ENCODE measurements at regions of chrX and their contacts with region 1.

Region 1: GRCh38 chrX:153947009-153947769 is 2.7 kb upstream of the RENBP start:
- DNase-seq: no peak
- ATAC-seq: peak; percentile 95
- H3K4me3 ChIP-seq: no peak overlapping the region
- H3K27ac ChIP-seq: no peak overlapping the region
- H3K4me1 ChIP-seq: no peaks in the 10 kb centered on the region
- H3K27me3 ChIP-seq: no peaks in the 10 kb centered on the region
- CTCF ChIP-seq: peak; percentile 95 to 97 (median 97); a peak in 5 of 6 replicates
- EP300 ChIP-seq: no peak
- POLR2A ChIP-seq: no peak; the same call in none of the 2 replicates
- RAD21 ChIP-seq: peak; percentile 62

Region 2: GRCh38 chrX:152614791-152615190 is 1332.4 kb before region 1 on chrX:
- CTCF ChIA-PET with region 1: no interaction called
- POLR2A ChIA-PET with region 1: no interaction called
- RAD21 ChIA-PET with region 1: no interaction called
- SMC1A ChIA-PET with region 1: no interaction called
- in situ Hi-C with region 1: no loop called
- intact Hi-C with region 1: no loop called
- DNase-seq: no peak
- ATAC-seq: no peak
- H3K4me3 ChIP-seq: no peak overlapping the region
- H3K27ac ChIP-seq: no peak overlapping the region
- H3K4me1 ChIP-seq: no peaks in the 10 kb centered on the region
- H3K27me3 ChIP-seq: no peaks in the 10 kb centered on the region; a peak in 1 of 4 replicates
- CTCF ChIP-seq: no peak
- EP300 ChIP-seq: no peak
- POLR2A ChIP-seq: no peak
- RAD21 ChIP-seq: no peak

Region 3: DNA sequence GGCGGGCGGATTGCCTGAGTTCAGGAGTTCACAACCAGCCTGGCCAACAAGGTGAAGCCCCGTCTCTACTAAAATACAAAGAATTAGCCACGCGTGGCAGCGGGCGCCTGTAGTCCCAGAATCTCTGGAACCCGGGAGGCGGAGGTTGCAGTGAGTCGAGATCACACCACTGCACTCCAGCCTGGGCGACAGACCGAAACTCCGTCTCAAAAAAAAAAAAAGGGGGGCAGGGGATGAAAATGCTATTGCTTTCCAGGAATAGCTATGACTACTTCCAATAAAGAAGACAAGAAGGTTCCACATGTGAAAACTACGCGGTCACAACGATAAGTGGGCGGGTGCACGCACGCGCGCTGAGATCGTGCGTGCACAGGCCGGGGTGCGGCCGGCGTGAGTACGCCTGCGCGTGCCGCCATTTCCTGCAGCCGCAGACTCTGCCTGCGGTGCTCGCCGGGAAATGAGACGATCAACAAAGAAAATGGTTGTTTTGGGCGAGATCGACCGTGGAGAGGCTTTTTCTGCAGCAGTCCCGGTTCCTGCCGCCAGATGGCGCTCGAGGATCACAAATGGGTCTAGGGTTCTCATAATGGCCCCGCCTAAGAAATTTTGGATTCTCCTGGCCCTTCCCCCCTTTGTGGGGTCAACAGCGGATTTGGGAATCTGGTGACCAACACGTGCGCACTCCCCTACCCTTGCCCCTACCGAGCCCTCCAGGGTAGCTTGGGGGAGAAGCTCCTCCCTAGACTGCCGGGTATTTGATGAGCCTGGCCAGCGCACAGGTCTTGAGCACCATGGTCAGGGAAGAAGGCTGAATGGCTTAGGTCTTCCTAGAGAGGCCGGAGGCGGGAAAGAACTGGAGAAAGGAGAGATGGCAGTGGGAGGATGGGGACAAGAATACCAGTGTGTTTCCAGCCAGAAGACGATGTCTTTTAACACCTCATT is 988.4 kb before region 1 on chrX:
- CTCF ChIA-PET with region 1: no interaction called
- POLR2A ChIA-PET with region 1: no interaction called
- RAD21 ChIA-PET with region 1: no interaction called
- SMC1A ChIA-PET with region 1: no interaction called
- in situ Hi-C with region 1: no loop called
- intact Hi-C with region 1: loop called (anchors 5 kb)
- DNase-seq: peak; percentile 55
- ATAC-seq: peak; percentile 100
- H3K4me3 ChIP-seq: peak overlapping the region; percentile 53; the same call in 1 of the 2 replicates
- H3K27ac ChIP-seq: no peak overlapping the region
- H3K4me1 ChIP-seq: no peaks in the 10 kb centered on the region
- H3K27me3 ChIP-seq: no peaks in the 10 kb centered on the region
- CTCF ChIP-seq: peak; percentile 87 to 97 (median 89)
- EP300 ChIP-seq: no peak
- POLR2A ChIP-seq: 0 out of 2 replicates have a peak, but pooled peaks have one; percentile 38
- RAD21 ChIP-seq: peak; percentile 90

Region 4: GRCh38 chrX:153800746-153801145 is 146.4 kb before region 1 on chrX:
- CTCF ChIA-PET with region 1: no interaction called
- POLR2A ChIA-PET with region 1: no interaction called
- RAD21 ChIA-PET with region 1: no interaction called
- SMC1A ChIA-PET with region 1: no interaction called
- in situ Hi-C with region 1: no loop called
- intact Hi-C with region 1: no loop called
- DNase-seq: no peak
- ATAC-seq: peak; percentile 25
- H3K4me3 ChIP-seq: no peak overlapping the region
- H3K27ac ChIP-seq: no peak overlapping the region
- H3K4me1 ChIP-seq: peaks cover 4% of the 10 kb centered on the region; the same call in 1 of the 2 replicates
- H3K27me3 ChIP-seq: no peaks in the 10 kb centered on the region
- CTCF ChIP-seq: no peak
- EP300 ChIP-seq: no peak
- POLR2A ChIP-seq: no peak
- RAD21 ChIP-seq: no peak

Region 5: GRCh38 chrX:153911798-153912197 is 35.4 kb before region 1 on chrX:
- CTCF ChIA-PET with region 1: interaction called, 10 read pairs
- POLR2A ChIA-PET with region 1: no interaction called
- RAD21 ChIA-PET with region 1: no interaction called
- SMC1A ChIA-PET with region 1: no interaction called
- in situ Hi-C with region 1: no loop called
- intact Hi-C with region 1: no loop called
- DNase-seq: no peak
- ATAC-seq: no peak
- H3K4me3 ChIP-seq: no peak overlapping the region
- H3K27ac ChIP-seq: no peak overlapping the region
- H3K4me1 ChIP-seq: no peaks in the 10 kb centered on the region
- H3K27me3 ChIP-seq: no peaks in the 10 kb centered on the region
- CTCF ChIP-seq: no peak
- EP300 ChIP-seq: no peak
- POLR2A ChIP-seq: no peak
- RAD21 ChIP-seq: no peak

Region 6: DNA sequence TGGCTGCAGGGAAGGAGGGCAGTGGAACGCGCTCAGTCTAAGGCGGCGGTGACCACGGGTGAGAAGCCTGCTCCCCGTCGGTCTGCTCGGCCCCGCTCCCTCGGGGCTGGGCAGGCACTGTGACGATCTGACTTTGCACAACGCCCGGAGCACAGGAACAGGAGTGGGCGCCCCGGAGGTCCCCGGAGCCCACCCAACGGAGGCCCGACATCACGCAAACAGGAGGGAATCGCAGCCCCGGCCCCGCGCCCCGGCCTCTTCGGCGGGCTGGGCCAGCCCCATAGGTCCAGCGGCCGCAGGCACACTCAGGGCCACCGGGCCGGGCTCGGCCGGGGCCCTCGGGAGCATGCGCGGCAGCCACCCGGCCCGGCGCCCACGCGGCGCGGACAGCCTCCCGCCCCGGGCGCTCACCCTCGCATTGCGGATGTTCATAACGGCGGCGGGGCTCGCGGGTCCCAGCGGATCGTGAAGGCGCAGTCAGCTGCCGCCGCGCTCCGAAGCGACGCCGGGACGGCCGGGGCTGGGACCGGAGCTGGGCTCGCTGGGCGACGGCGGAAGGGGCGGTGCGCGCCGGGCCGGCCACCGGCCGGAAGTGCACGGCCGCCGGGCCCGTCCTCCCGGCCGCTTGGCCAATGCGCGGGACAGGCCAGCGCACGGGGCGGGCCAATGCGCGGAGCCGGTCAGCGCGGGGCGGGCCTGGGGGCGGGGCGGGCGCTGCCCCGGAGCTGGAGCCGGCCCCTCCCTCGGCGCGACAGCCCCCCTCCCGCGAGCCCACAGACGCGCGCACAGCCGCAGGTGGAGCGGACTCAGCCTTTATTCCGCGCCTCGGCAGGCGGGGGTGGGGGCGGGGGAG is 12.5 kb before region 1 on chrX and contains the start of gene NAA10:
- CTCF ChIA-PET with region 1: interaction called, 172 read pairs
- POLR2A ChIA-PET with region 1: no interaction called
- RAD21 ChIA-PET with region 1: interaction called, 3 read pairs
- SMC1A ChIA-PET with region 1: interaction called, 4 read pairs
- in situ Hi-C with region 1: no loop called
- intact Hi-C with region 1: no loop called
- DNase-seq: no peak
- ATAC-seq: peak; percentile 97
- H3K4me3 ChIP-seq: peak within 1 kb of the TSS; percentile 90
- H3K27ac ChIP-seq: 0 out of 2 replicates have a peak within 1 kb of the TSS, but pooled peaks have one; percentile 48
- H3K4me1 ChIP-seq: no peaks in the 10 kb centered on the region
- H3K27me3 ChIP-seq: no peaks in the 10 kb centered on the region
- CTCF ChIP-seq: no peak
- EP300 ChIP-seq: no peak
- POLR2A ChIP-seq: peak; percentile 60; the same call in 1 of the 2 replicates
- RAD21 ChIP-seq: no peak
- polyA plus RNA-seq, gene NAA10: 7.9 to 26.6 TPM

Measured in GM12878 (cell line).